ENCODE measurements at regions of chr19 and their contacts with region 1.

Region 1: DNA sequence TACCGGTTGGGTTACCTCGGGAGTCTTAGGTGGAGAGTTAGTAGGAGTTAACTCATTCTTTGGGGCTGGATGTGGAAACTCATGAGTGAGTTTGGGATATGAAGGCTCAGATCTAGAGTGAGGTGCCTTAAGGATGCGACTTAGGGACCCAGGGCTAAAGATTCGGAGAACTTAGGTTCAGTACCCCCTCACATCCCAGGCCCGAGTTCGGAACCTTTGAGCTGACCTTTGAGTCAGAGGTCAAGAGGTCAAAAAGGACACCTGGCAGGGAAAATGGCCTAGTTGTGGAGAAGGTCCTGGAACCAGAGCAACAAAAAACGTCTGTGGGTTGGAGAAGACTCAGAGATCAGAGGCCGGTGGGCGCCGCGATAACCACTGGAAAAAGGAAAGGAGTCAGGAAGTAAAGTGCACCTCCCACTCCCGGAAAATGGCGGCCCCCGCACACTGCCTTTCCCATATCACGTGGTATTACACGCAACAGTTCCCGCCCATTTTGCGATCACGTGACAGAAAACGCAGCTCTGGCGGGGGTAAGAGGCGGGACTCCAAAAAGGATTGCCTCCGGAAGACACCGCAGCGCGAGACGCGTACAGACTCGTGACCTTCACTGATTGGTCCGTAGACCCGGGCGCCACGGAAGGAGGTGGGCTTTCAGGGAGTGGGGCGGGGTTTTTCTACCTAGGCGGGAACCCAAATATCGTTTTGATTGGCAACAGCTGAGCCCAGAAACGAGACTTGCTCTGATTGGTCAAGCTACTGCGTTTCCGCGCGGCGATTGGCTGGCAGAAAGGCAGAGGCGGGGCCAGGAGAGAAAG is at the start of gene ACTMAP:
- DNase-seq: peak; percentile 100
- ATAC-seq: peak; percentile 95 to 98 (median 97)
- H3K4me3 ChIP-seq: peak within 1 kb of the TSS; percentile 38 to 85 (median 71)
- H3K27ac ChIP-seq: peak within 1 kb of the TSS; percentile 90 to 100 (median 96)
- H3K4me1 ChIP-seq: peaks cover 2 to 72% (median 37%) of the 10 kb centered on the region in 12 donors
- H3K27me3 ChIP-seq: no peaks in the 10 kb centered on the region
- CTCF ChIP-seq: no peak
- POLR2A ChIP-seq: peak; percentile 30 to 81
- total RNA-seq, gene ACTMAP: 4.2 to 11.1 (median 8.6) TPM

Region 2: GRCh38 chr19:40690693-40691420 is 59.4 kb before region 1 on chr19:
- intact Hi-C with region 1: loop called in 1 of 10 experiments (anchors 2 kb)
- DNase-seq: peak; percentile 96 to 97 (median 96)
- ATAC-seq: peak; percentile 86 to 91 (median 90)
- H3K4me3 ChIP-seq: peak overlapping the region; percentile 58 to 93 (median 72)
- H3K27ac ChIP-seq: peak overlapping the region; percentile 82 to 94 (median 86)
- H3K4me1 ChIP-seq: peaks cover 0 to 43% (median 20%) of the 10 kb centered on the region in 12 donors
- H3K27me3 ChIP-seq: no peaks in the 10 kb centered on the region
- CTCF ChIP-seq: no peak
- POLR2A ChIP-seq: peak in 1 of 2 donors; percentile 40

Region 3: GRCh38 chr19:40716655-40717324 is 33.5 kb before region 1 on chr19 and contains the starts of genes COQ8B and ITPKC:
- intact Hi-C with region 1: loop called in 5 of 10 experiments (anchors 1 to 2 kb)
- DNase-seq: peak; percentile 100
- ATAC-seq: peak; percentile 71 to 85 (median 82)
- H3K4me3 ChIP-seq: peak within 1 kb of the TSS; percentile 65 to 98 (median 82)
- H3K27ac ChIP-seq: peak within 1 kb of the TSS; percentile 95 to 99 (median 97)
- H3K4me1 ChIP-seq: peaks cover 5 to 78% (median 53%) of the 10 kb centered on the region in 12 donors
- H3K27me3 ChIP-seq: no peaks in the 10 kb centered on the region
- CTCF ChIP-seq: peak in 6 of 12 donors; percentile 13 to 38 (median 24)
- POLR2A ChIP-seq: peak; percentile 53 to 74
- total RNA-seq, gene COQ8B: 18.2 to 49.7 (median 27.8) TPM
- total RNA-seq, gene ITPKC: 6.9 to 27.3 (median 8.9) TPM

Region 4: GRCh38 chr19:40777937-40778705 is 27.9 kb after region 1 on chr19 and contains the start of gene RAB4B:
- intact Hi-C with region 1: loop called in 3 of 10 experiments (anchors 1 to 2 kb)
- DNase-seq: peak; percentile 100
- ATAC-seq: peak; percentile 95 to 98 (median 97)
- H3K4me3 ChIP-seq: peak within 1 kb of the TSS; percentile 67 to 94 (median 74)
- H3K27ac ChIP-seq: peak within 1 kb of the TSS; percentile 89 to 100 (median 98)
- H3K4me1 ChIP-seq: peaks cover 0 to 25% (median 13%) of the 10 kb centered on the region in 12 donors
- H3K27me3 ChIP-seq: no peaks in the 10 kb centered on the region
- CTCF ChIP-seq: peak in 2 of 12 donors; percentile 11 to 14
- POLR2A ChIP-seq: peak; percentile 23 to 84
- total RNA-seq, gene RAB4B: 12.3 to 31.3 (median 15.0) TPM

Region 5: GRCh38 chr19:40798223-40798996 is 48.1 kb after region 1 on chr19:
- intact Hi-C with region 1: loop called in 5 of 10 experiments (anchors 2 to 5 kb)
- DNase-seq: peak; percentile 100
- ATAC-seq: peak; percentile 84 to 90 (median 88)
- H3K4me3 ChIP-seq: peak overlapping the region in 11 of 12 donors; percentile 44 to 99 (median 94)
- H3K27ac ChIP-seq: peak overlapping the region; percentile 75 to 99 (median 96)
- H3K4me1 ChIP-seq: peaks cover 30 to 45% (median 37%) of the 10 kb centered on the region in 12 donors
- H3K27me3 ChIP-seq: no peaks in the 10 kb centered on the region
- CTCF ChIP-seq: peak in 9 of 12 donors; percentile 21 to 62 (median 52)
- POLR2A ChIP-seq: peak in 1 of 2 donors; percentile 55

Region 6: DNA sequence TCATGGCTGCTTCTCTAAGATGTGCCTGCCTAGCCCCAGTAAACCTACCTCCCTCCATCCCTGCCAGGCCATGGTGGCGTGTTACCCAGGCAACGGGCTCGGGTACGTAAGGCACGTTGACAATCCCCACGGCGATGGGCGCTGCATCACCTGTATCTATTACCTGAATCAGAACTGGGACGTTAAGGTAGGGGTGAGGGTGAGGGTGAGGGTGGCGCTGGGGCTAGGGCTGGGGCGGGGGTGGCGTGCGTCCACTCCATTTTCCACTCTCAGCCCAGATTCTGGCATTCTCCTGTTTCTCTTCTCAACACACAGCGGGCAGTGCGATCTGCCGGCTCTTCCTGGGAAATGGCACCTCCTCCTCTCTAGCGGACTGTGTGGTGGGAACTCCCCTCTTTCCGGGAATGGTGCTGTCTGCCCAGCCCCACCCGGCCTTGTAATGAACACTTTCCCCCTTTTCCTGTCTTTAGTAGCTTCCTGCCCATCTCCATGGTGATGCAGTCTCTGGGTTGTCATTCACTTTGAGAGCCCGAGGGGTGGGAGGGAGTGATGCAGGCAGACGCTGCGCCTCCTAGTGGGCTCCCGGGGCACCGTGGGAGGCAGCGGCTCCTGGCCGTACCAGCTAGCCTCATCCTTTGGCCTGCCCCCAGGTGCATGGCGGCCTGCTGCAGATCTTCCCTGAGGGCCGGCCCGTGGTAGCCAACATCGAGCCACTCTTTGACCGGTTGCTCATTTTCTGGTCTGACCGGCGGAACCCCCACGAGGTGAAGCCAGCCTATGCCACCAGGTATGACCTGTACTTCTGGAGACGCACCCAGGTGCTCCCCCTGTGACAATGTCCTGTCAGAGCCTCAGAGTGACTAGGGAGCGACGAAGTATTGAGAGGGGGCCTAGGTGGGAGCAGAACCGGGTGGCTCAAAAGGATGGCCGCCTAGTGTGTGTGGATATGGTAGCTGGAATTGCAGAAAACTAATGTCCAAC is 56.5 kb after region 1 on chr19:
- intact Hi-C with region 1: loop called in 1 of 10 experiments (anchors 2 kb)
- DNase-seq: peak; percentile 84 to 90 (median 87)
- ATAC-seq: peak; percentile 38 to 64 (median 48)
- H3K4me3 ChIP-seq: peak overlapping the region in 9 of 12 donors; percentile 1 to 38 (median 20)
- H3K27ac ChIP-seq: peak overlapping the region; percentile 13 to 99 (median 97)
- H3K4me1 ChIP-seq: peaks cover 42 to 96% (median 82%) of the 10 kb centered on the region in 12 donors
- H3K27me3 ChIP-seq: no peaks in the 10 kb centered on the region
- CTCF ChIP-seq: peak; percentile 75 to 95 (median 86)
- POLR2A ChIP-seq: peak in 1 of 2 donors; percentile 33

Region 7: GRCh38 chr19:40813182-40813958 is 63.1 kb after region 1 on chr19:
- intact Hi-C with region 1: loop called in 3 of 10 experiments (anchors 2 to 5 kb)
- DNase-seq: no peak
- ATAC-seq: no peak
- H3K4me3 ChIP-seq: no peak overlapping the region
- H3K27ac ChIP-seq: no peak overlapping the region
- H3K4me1 ChIP-seq: peaks cover 4 to 46% (median 31%) of the 10 kb centered on the region in 12 donors
- H3K27me3 ChIP-seq: no peaks in the 10 kb centered on the region
- CTCF ChIP-seq: no peak
- POLR2A ChIP-seq: no peak

Measured in heart left ventricle (tissue), 16 donors.